A673 (cell line): ENCODE measurements at regions of chr19 and their contacts with region 1.

Region 1: GRCh38 chr19:14459703-14460102 is 15.5 kb downstream of the PTGER1 start:
- DNase-seq: no peak
- H3K4me3 ChIP-seq: no peak overlapping the region
- H3K27ac ChIP-seq: no peak overlapping the region
- H3K4me1 ChIP-seq: no peaks in the 10 kb centered on the region
- H3K27me3 ChIP-seq: no peaks in the 10 kb centered on the region
- CTCF ChIP-seq: no peak

Region 2: DNA sequence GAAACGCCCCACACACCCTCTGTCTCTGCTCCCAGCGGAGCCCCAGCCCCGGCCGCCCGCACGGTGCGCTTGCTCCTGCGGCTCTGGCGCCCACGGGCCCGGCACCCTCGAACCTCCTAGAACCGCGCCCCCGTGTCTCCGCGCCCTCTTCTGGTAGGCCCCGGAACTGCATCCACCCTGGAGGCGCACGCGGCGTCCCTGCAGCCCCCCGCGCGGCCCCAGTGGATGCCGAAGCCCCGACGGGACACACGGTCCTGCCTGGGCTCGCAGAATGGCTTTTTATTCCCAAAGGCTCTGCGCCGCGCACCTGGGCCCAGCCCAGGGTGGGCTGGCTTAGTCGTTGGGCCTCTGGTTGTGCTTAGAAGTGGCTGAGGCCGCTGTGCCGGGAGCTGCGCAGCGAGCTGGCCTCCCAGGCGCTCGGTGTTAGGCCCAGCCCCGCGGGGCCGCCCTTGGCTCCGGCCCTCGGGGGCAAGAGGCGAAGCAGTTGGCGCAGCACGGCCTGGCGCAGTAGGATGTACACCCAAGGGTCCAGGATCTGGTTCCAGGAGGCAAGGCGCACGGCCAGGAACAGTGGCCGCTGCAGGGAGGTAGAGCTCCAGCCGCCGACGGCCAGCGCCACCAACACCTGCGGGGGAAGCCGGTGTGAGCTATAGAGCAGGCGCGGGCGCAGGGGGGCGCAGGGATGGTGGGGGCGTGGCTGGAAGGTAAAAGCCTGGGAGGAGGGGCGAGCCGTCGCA is 12.7 kb after region 1 on chr19:
- CTCF ChIA-PET with region 1: interaction called, 11 read pairs
- POLR2A ChIA-PET with region 1: no interaction called
- intact Hi-C with region 1: no loop called
- DNase-seq: peak; percentile 80
- H3K4me3 ChIP-seq: no peak overlapping the region
- H3K27ac ChIP-seq: no peak overlapping the region
- H3K4me1 ChIP-seq: peaks cover 28% of the 10 kb centered on the region
- H3K27me3 ChIP-seq: no peaks in the 10 kb centered on the region
- CTCF ChIP-seq: peak; percentile 99